ENCODE measurements at regions of chr17 and their contacts with region 1.

Region 1: DNA sequence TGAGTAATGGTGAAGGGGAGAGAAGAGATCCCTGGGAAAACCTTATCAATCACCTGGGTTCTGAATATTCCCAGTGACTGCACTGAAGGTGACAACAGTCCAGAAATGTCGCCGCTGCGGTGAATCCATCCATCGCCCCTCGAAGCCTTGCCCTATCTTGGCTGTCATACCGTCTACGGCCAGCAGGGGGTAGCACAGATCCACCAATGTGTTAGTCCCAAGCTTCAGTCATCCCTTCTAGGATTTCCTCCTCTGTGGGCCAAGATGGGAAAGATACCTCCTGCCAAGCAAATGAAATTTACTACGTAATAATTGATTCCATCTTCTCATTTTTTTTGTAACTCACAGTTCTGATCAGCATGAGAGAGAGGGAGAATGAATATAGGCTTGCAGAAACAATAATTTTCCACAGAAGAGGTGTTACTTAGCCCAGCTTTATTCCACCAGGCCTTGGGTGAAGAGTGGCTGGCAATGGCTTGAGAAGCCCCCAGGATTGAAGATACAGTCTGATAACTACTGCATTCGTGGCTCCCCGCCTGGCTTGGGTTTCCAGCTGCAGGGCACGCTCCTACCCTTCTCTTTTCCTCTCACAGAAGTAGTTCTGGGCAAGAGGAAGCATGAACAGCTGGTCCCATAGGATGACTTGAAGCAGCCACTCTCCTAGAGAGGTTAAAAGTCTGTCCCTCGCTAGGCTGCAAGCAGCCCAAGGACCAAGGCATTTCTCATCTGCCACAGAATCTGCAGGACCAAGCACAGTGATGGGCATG is 2.6 kb upstream of the FMNL1 start:
- DNase-seq: peak; percentile 67
- ATAC-seq: peak; percentile 80
- H3K4me3 ChIP-seq: no peak overlapping the region; a peak in 1 of 4 replicates
- H3K27ac ChIP-seq: no peak overlapping the region
- H3K4me1 ChIP-seq: peaks cover 0 to 29% of the 10 kb centered on the region in 2 experiments; a peak in 3 of 4 replicates
- H3K27me3 ChIP-seq: no peaks in the 10 kb centered on the region
- CTCF ChIP-seq: peak; percentile 87 to 96 (median 95)
- POLR2A ChIP-seq: no peak
- RAD21 ChIP-seq: peak; percentile 97

Region 2: GRCh38 chr17:45073414-45074070 is 145.5 kb before region 1 on chr17:
- CTCF ChIA-PET with region 1: no interaction called
- POLR2A ChIA-PET with region 1: no interaction called
- RAD21 ChIA-PET with region 1: no interaction called
- intact Hi-C with region 1: no loop called
- DNase-seq: no peak
- ATAC-seq: no peak
- H3K4me3 ChIP-seq: no peak overlapping the region
- H3K27ac ChIP-seq: no peak overlapping the region
- H3K4me1 ChIP-seq: peaks cover 0 to 13% of the 10 kb centered on the region in 2 experiments; a peak in 3 of 4 replicates
- H3K27me3 ChIP-seq: no peaks in the 10 kb centered on the region
- CTCF ChIP-seq: no peak
- POLR2A ChIP-seq: no peak
- RAD21 ChIP-seq: no peak

Region 3: GRCh38 chr17:45197555-45198334 is 21.3 kb before region 1 on chr17:
- CTCF ChIA-PET with region 1: interaction called, 13 read pairs
- POLR2A ChIA-PET with region 1: no interaction called
- RAD21 ChIA-PET with region 1: interaction called in 1 of 2 experiments, 3 read pairs
- intact Hi-C with region 1: no loop called
- DNase-seq: peak; percentile 81
- ATAC-seq: peak; percentile 96
- H3K4me3 ChIP-seq: no peak overlapping the region
- H3K27ac ChIP-seq: peak overlapping the region; percentile 53
- H3K4me1 ChIP-seq: peaks cover 12 to 31% of the 10 kb centered on the region in 2 experiments; a peak in 3 of 4 replicates
- H3K27me3 ChIP-seq: no peaks in the 10 kb centered on the region
- CTCF ChIP-seq: peak; percentile 98 to 99 (median 99)
- POLR2A ChIP-seq: no peak
- RAD21 ChIP-seq: peak; percentile 100

Region 4: DNA sequence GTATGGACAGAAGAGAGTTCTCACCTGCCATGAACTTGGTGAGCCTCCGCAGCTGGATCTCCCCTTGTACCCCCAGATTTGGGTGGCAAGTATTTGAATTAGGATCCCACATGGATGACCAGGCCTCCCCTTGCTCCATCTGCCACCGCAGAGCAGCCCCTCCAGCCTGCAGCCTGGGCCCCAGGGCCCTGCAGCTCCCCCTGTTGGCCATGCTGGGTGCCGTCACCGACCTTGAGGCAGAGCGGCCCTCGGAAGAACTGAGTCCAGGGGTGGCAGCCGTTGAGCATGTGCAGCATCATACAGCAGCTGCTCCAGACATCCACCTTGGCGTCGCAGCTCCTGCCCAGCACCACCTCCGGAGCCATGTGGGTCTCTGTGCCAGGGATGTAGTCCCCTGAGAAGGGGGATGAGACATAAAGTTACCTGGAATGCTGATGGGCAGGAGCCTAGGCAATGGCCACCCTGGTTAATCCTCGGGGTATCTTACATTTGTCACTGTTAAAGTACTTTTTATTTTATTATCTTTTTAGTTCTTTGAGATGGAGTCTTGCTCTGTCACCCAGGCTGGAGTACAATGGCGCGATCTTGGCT is 51.8 kb after region 1 on chr17:
- CTCF ChIA-PET with region 1: interaction called, 3 read pairs
- POLR2A ChIA-PET with region 1: interaction called, 3 read pairs
- RAD21 ChIA-PET with region 1: interaction called in 1 of 2 experiments, 3 read pairs
- intact Hi-C with region 1: loop called (anchors 1 kb)
- DNase-seq: no peak
- ATAC-seq: peak; percentile 83
- H3K4me3 ChIP-seq: no peak overlapping the region
- H3K27ac ChIP-seq: no peak overlapping the region
- H3K4me1 ChIP-seq: 0 out of 4 replicates have a peak, but pooled peaks cover 0 to 4% of the 10 kb centered on the region in 2 experiments
- H3K27me3 ChIP-seq: no peaks in the 10 kb centered on the region
- CTCF ChIP-seq: peak; percentile 45 to 86 (median 83); a peak in 5 of 6 replicates
- POLR2A ChIP-seq: no peak
- RAD21 ChIP-seq: peak; percentile 57

Region 5: DNA sequence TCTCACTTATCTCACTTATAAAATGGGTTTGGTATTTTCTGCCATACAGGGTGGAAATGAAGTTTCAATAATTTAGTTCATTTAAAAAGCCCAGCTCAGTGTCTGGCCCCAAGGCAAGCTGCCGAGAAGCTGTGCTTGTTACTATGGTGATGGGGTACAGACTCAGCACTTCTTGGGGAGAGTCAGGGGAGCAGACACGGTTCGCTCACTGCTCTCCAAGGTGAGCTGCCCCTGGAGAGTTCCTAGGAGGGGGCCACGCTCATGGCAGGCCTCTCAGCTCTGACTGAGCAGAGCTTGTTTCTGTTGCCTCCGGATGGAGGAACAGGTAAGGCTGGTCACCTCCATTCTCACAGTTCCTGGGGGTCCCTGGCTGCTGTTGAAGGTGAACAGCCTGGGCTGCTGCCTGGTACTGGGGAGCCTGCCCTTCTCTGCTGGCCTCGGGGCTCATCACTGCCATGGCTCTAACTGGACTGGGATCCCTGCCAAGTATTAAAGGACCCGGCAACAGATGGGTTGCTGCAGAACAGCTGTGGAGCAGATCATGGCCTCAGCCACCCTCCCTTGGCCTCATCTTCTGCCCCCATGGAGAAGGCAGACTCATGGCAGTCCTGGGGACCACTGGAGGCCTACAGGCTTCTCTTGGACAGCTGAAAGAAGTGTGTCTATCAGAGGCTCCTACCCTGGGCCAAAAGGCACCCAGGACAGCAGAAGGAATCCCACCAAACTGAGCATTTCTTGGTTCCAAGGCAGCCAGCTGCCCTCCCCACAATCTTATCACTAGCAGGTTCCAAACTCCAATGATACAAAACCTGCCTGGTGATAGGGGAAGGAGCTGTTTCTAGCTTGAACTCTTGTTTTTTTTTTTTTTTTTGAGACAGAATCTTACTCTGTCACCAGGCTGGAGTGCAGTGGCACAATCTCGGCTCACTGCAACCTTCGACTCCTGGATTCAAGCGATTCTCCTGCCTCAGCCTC is 68.7 kb after region 1 on chr17:
- CTCF ChIA-PET with region 1: no interaction called
- POLR2A ChIA-PET with region 1: no interaction called
- RAD21 ChIA-PET with region 1: no interaction called
- intact Hi-C with region 1: no loop called
- DNase-seq: no peak
- ATAC-seq: no peak
- H3K4me3 ChIP-seq: no peak overlapping the region
- H3K27ac ChIP-seq: no peak overlapping the region; the same call in 1 of the 2 replicates
- H3K4me1 ChIP-seq: peaks cover 1 to 8% of the 10 kb centered on the region in 2 experiments
- H3K27me3 ChIP-seq: no peaks in the 10 kb centered on the region
- CTCF ChIP-seq: no peak
- POLR2A ChIP-seq: no peak
- RAD21 ChIP-seq: no peak

Region 6: DNA sequence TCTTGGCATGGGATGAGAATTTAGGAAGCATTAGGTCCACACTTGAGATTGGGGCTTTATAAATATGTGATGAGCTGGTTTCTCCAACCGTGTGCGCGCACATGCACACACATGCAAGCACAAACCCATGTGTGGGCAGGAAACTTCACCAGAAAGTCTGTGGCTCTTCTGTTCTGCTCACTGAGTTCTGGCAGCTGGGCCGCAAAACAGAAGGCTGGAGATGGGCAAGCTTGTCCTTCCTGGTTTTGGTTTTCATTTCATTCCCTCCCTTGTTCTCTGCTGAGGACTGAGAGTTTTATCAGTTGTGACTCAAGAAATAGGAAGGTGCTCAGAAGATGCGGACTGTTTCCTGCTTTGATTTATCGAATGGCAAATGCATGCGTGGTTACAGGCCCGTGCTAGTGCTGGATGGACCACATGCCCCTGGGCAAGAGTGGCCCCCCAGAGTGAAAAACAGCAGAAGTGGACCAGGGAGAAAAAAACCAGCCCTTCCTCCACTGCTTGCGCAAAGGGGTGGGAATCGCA is 83.6 kb after region 1 on chr17:
- CTCF ChIA-PET with region 1: no interaction called
- POLR2A ChIA-PET with region 1: no interaction called
- RAD21 ChIA-PET with region 1: no interaction called
- intact Hi-C with region 1: no loop called
- DNase-seq: no peak
- ATAC-seq: no peak
- H3K4me3 ChIP-seq: no peak overlapping the region
- H3K27ac ChIP-seq: 0 out of 2 replicates have a peak overlapping the region, but pooled peaks have one; percentile 16
- H3K4me1 ChIP-seq: peaks cover 23 to 66% of the 10 kb centered on the region in 2 experiments
- H3K27me3 ChIP-seq: no peaks in the 10 kb centered on the region
- CTCF ChIP-seq: no peak
- POLR2A ChIP-seq: no peak
- RAD21 ChIP-seq: no peak

Region 7: GRCh38 chr17:45385331-45385997 is 166.4 kb after region 1 on chr17:
- CTCF ChIA-PET with region 1: interaction called, 18 read pairs
- POLR2A ChIA-PET with region 1: no interaction called
- RAD21 ChIA-PET with region 1: no interaction called
- intact Hi-C with region 1: loop called (anchors 1 kb)
- DNase-seq: peak; percentile 87
- ATAC-seq: peak; percentile 94
- H3K4me3 ChIP-seq: no peak overlapping the region
- H3K27ac ChIP-seq: no peak overlapping the region
- H3K4me1 ChIP-seq: peaks cover 0 to 35% of the 10 kb centered on the region in 2 experiments; a peak in 2 of 4 replicates
- H3K27me3 ChIP-seq: no peaks in the 10 kb centered on the region
- CTCF ChIP-seq: peak; percentile 99 to 100 (median 100)
- POLR2A ChIP-seq: no peak
- RAD21 ChIP-seq: peak; percentile 100

Region 8: DNA sequence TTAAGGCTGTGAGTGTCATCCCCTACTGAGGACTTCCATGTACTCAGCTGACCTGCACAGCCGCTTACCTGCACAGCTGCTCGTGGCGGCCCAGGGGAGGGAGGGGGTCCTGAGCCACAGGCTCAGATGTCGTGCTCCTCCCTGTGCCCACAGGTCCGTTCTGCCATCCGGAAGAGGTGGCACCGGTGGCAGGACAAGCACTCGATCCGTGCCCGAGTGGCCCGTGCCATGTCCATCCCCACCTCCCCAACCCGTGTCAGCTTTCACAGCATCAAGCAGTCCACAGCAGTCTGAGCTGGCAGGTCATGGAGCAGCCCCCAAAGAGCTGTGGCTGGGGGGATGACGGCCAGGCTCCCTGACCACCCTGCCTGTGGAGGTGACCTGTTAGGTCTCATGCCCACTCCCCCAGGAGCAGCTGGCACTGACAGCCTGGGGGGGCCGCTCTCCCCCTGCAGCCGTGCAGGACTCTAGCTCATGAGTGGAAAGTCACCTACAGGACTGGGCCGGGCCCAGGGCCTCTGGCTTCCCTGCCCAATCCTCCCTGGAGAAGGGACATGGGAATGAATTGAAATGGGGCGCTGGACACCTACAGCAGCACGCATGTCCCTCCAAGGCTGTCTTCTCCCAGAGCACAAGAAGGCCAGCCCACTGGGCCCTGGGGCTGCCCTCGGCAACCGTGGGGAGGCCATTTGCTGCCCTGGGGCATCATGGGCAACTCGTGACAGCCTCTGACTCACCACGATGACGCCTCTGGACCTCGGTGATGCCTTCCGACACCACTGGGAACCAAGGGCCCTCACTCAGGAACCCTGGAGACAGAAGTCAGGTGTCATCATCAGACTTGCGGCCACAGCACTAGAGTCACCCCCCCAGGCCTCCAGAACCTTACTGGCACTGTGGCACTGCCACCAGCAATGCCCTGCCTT is 615.7 kb after region 1 on chr17:
- CTCF ChIA-PET with region 1: no interaction called
- POLR2A ChIA-PET with region 1: no interaction called
- RAD21 ChIA-PET with region 1: no interaction called
- intact Hi-C with region 1: loop called (anchors 5 kb)
- DNase-seq: no peak
- ATAC-seq: peak; percentile 25; the same call in 1 of the 2 replicates
- H3K4me3 ChIP-seq: no peak overlapping the region
- H3K27ac ChIP-seq: no peak overlapping the region
- H3K4me1 ChIP-seq: peaks cover 0 to 7% of the 10 kb centered on the region in 2 experiments; a peak in 2 of 4 replicates
- H3K27me3 ChIP-seq: no peaks in the 10 kb centered on the region; the same call in 1 of the 2 replicates
- CTCF ChIP-seq: no peak
- POLR2A ChIP-seq: no peak
- RAD21 ChIP-seq: no peak